Endothelial cell of umbilical vein (primary cell): ENCODE measurements at regions of chr14 and their contacts with region 1.

Region 1: DNA sequence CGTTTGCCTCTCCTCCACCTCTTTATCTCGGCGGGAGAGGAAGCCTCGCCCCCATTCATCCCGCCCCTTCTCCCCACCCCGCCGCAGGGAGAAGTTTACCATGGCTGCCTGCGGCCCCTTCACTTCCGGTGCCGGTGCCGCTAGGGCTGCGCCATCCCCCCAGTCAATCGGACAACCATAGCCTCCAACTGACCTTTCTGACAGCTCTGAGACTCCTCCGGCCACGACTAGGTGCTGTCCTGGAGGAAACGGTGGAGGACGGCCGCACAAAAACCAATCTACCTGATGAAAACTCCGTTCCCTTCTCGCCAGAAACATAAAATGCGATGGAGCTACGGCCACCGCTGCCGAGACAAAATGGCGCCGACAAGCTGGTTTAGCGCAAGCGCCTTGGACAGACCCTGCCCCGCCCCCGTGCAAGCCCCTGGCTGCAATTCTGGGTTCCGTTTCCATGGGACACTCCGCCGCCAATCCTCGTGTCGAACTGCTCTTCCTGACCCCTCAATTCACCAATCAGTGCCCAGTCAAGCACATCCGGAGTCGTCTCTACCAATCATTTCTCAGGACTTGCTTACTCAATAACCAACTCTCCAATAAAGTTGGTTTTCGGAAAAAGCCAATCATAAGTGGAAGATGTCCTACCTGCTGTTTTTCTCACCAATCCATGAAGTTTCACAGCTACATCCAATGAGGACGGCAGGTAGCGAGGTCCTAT is 436 bp upstream of the ARID4A start:
- DNase-seq: peak; percentile 100
- H3K4me3 ChIP-seq: peak overlapping the region; percentile 91 to 97 (median 92)
- H3K27ac ChIP-seq: peak overlapping the region; percentile 90
- H3K4me1 ChIP-seq: peaks cover 14% of the 10 kb centered on the region
- H3K27me3 ChIP-seq: no peaks in the 10 kb centered on the region
- CTCF ChIP-seq: no peak
- POLR2A ChIP-seq: peak; percentile 58

Region 2: DNA sequence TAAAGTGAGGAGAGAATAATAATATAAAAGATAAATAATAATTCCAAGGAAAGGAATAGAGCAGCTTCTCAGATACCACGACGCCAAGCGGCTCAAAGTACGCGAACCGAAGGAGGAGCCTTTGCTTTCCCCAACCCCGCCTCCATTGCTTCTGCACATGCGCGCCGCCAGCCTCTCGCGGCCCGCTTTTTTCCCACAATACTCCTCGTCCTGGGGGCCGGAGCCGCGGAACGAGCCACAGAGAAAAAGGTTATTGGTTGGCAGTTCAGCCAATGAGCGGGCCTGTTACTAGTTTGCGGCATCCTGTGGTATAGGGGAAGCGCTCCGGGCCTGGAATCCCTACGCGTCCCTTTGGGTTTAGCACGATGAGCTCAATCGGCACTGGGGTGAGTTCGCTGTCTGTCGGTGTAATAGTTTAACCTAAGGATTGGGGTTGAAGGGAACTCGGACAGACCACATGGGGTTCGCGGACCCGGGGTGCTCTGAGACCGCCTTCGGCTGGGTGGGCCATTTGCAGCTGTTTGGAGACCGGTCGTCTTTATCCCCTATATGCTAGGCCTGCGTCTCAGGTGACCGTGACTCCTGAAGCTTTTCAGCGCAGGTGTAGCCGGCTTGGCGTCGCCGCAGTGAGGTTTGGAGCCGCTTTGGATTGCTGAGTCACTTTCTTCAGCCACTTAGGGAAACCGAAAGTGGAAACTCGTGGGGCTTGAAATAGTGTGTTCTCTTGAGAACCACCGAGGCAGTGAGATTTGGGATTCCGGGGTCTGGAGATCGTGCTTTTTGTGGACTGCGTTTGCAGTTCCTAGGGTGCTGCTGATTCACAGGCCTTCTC is 53.1 kb before region 1 on chr14 and contains the start of gene PSMA3:
- CTCF ChIA-PET with region 1: interaction called, 4 read pairs
- POLR2A ChIA-PET with region 1: interaction called, 9 read pairs
- dilution Hi-C with region 1: no loop called
- intact Hi-C with region 1: loop called (anchors 1 kb)
- DNase-seq: peak; percentile 98
- H3K4me3 ChIP-seq: peak within 1 kb of the TSS; percentile 77 to 98 (median 85)
- H3K27ac ChIP-seq: peak within 1 kb of the TSS; percentile 93
- H3K4me1 ChIP-seq: peaks cover 22% of the 10 kb centered on the region
- H3K27me3 ChIP-seq: no peaks in the 10 kb centered on the region
- CTCF ChIP-seq: no peak
- POLR2A ChIP-seq: peak; percentile 95
- total RNA-seq, gene PSMA3: 228 and 240 TPM in 2 replicates

Region 3: DNA sequence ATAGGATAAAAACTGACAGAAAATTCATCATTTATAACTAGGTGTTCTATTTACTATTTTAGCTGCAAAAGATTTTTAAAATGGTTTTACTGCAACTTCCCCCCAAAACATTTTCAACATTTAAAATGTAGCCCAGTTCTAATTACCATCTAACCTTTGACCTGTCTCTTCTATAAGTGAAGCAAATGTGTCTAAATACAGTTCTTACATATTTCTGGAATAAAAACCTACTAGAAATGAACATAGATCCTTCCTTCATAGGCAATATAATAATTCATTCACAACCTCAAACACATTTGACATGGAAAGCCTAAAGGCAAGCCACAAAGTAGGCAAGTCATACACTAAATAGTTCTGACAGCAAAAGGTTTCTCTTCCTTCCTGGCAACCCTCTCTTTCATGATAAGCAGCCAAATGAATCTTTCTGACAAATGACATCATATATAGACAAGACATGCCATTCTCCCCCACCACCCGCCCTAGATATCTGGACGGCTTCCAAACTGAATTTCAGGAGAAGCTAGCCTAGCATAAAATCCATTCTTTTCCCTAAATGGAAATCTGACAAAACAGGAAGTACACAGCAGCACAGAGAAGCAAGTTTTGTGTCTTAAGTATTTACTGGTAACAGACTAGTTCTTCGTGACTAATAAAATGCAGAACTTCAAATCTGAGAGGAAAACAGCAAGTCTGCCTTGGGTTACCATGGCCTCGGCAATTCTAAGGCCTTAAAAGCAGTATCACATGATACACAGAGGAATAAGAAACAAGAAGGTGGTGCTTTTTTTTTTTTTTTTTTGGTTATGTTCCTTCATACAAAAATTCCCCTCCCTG is 16.7 kb before region 1 on chr14:
- CTCF ChIA-PET with region 1: interaction called, 12 read pairs
- POLR2A ChIA-PET with region 1: interaction called, 7 read pairs
- dilution Hi-C with region 1: no loop called
- intact Hi-C with region 1: loop called (anchors 1 kb)
- DNase-seq: peak; percentile 95
- H3K4me3 ChIP-seq: peak overlapping the region in 1 of 3 experiments; percentile 4
- H3K27ac ChIP-seq: peak overlapping the region; percentile 72
- H3K4me1 ChIP-seq: peaks cover 25% of the 10 kb centered on the region
- H3K27me3 ChIP-seq: no peaks in the 10 kb centered on the region
- CTCF ChIP-seq: no peak
- POLR2A ChIP-seq: no peak

Region 4: GRCh38 chr14:58287607-58288042 is 10.3 kb before region 1 on chr14:
- CTCF ChIA-PET with region 1: interaction called, 12 read pairs
- POLR2A ChIA-PET with region 1: interaction called, 9 read pairs
- dilution Hi-C with region 1: no loop called
- intact Hi-C with region 1: no loop called
- DNase-seq: no peak
- H3K4me3 ChIP-seq: no peak overlapping the region
- H3K27ac ChIP-seq: no peak overlapping the region
- H3K4me1 ChIP-seq: peaks cover 3% of the 10 kb centered on the region
- H3K27me3 ChIP-seq: no peaks in the 10 kb centered on the region
- CTCF ChIP-seq: no peak
- POLR2A ChIP-seq: no peak

Region 5: DNA sequence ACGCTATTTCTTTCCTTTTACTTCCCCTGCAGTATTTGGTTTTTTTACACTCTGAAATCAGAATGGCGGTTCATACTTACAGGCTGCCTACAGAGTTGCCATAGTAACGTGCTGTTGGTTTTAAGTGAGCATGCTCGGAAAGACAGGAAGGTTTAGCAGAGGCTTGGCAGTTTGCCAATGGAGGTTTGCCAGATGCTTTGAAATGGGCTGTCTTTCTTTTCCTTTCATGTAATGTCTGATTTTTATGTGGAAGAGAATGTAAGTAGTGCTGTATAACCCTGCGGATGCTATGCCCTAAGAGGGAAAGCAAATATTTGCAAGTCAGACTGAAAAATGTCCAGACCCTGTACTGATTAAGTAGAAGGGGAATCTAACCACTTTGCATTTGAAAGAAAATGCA is 33.2 kb after region 1 on chr14:
- CTCF ChIA-PET with region 1: interaction called, 3 read pairs
- POLR2A ChIA-PET with region 1: no interaction called
- dilution Hi-C with region 1: no loop called
- intact Hi-C with region 1: loop called (anchors 1 kb)
- DNase-seq: peak; percentile 98
- H3K4me3 ChIP-seq: peak overlapping the region in 1 of 3 experiments; percentile 26
- H3K27ac ChIP-seq: peak overlapping the region; percentile 22
- H3K4me1 ChIP-seq: peaks cover 10% of the 10 kb centered on the region
- H3K27me3 ChIP-seq: no peaks in the 10 kb centered on the region
- CTCF ChIP-seq: no peak
- POLR2A ChIP-seq: no peak

Region 6: DNA sequence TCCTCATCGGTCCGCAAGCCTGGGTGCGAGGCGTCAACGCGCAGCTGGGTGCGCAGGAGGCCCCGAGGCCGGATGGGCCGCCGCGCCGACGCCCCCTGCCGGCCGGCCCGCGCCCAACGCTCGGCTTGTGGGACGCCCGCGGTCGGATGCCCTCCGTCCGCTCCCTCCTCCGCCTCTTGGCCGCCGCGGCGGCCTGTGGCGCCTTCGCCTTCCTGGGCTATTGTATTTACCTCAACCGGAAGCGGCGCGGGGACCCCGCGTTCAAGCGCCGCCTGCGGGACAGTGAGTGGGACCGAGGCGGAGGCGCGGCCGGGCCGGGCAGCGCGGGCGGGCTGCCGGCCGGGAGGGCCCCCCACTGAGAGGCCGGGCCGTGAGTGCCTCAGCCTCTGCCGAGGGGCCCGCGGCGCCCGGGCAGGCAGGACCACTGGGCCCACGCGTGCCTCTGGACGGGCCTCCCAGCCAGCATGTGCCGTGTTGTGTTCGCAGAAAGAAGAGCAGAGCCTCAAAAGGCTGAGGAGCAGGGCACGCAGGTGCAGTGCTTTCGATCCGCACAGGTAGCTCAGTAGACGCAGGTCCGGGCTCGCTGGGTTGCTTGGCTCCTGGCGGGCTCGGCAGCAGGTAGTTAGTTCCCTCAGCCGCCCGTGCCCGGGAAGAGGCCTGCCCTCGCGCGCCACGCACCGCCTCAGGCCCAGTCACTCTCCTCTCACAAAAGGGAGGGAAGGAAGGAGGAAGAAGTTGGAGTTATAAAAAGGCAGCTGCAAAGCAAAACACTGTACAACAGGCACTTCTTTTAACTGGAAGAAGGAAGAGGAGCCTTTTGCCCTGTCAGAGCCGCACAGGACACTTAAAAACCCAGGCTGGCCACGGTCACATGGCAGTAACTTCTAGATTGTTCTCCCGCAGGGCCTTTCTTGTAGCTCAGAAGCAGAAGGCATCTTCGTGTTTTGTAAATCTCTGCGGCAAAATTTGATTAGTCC is 98.2 kb after region 1 on chr14 and contains the start of gene TOMM20L:
- CTCF ChIA-PET with region 1: interaction called, 6 read pairs
- POLR2A ChIA-PET with region 1: no interaction called
- dilution Hi-C with region 1: no loop called
- intact Hi-C with region 1: loop called (anchors 2 kb)
- DNase-seq: peak; percentile 68
- H3K4me3 ChIP-seq: peak within 1 kb of the TSS; percentile 1 to 52 (median 51)
- H3K27ac ChIP-seq: peak within 1 kb of the TSS; percentile 40
- H3K4me1 ChIP-seq: peaks cover 10% of the 10 kb centered on the region
- H3K27me3 ChIP-seq: no peaks in the 10 kb centered on the region
- CTCF ChIP-seq: peak; percentile 58 to 97
- POLR2A ChIP-seq: peak; percentile 54
- total RNA-seq, gene TOMM20L: not detected in 2 replicates

Region 7: GRCh38 chr14:58427281-58428117 is 129.6 kb after region 1 on chr14 and contains the starts of genes KIAA0586 and TIMM9:
- CTCF ChIA-PET with region 1: interaction called, 4 read pairs
- POLR2A ChIA-PET with region 1: interaction called, 3 read pairs
- dilution Hi-C with region 1: no loop called
- intact Hi-C with region 1: loop called (anchors 1 kb)
- DNase-seq: peak; percentile 98
- H3K4me3 ChIP-seq: peak within 1 kb of the TSS; percentile 72 to 96 (median 85)
- H3K27ac ChIP-seq: peak within 1 kb of the TSS; percentile 95
- H3K4me1 ChIP-seq: peaks cover 21% of the 10 kb centered on the region
- H3K27me3 ChIP-seq: no peaks in the 10 kb centered on the region
- CTCF ChIP-seq: no peak
- POLR2A ChIP-seq: peak; percentile 88
- total RNA-seq, gene KIAA0586: 25.9 and 29.2 TPM in 2 replicates
- total RNA-seq, gene TIMM9: 38.0 and 42.4 TPM in 2 replicates